ENCODE measurements at regions of chr14 and their contacts with region 1.

Region 1: GRCh38 chr14:102591889-102592763 is at the start of gene RCOR1:
- DNase-seq: peak; percentile 97
- H3K4me3 ChIP-seq: peak within 1 kb of the TSS; percentile 88 to 96 (median 95)
- H3K27ac ChIP-seq: peak within 1 kb of the TSS; percentile 98 to 100
- H3K4me1 ChIP-seq: peaks cover 3 to 9% of the 10 kb centered on the region in 2 donors
- H3K27me3 ChIP-seq: no peaks in the 10 kb centered on the region
- CTCF ChIP-seq: no peak
- POLR2A ChIP-seq: no peak
- total RNA-seq, gene RCOR1: 15.7 to 21.8 (median 20.3) TPM

Region 2: DNA sequence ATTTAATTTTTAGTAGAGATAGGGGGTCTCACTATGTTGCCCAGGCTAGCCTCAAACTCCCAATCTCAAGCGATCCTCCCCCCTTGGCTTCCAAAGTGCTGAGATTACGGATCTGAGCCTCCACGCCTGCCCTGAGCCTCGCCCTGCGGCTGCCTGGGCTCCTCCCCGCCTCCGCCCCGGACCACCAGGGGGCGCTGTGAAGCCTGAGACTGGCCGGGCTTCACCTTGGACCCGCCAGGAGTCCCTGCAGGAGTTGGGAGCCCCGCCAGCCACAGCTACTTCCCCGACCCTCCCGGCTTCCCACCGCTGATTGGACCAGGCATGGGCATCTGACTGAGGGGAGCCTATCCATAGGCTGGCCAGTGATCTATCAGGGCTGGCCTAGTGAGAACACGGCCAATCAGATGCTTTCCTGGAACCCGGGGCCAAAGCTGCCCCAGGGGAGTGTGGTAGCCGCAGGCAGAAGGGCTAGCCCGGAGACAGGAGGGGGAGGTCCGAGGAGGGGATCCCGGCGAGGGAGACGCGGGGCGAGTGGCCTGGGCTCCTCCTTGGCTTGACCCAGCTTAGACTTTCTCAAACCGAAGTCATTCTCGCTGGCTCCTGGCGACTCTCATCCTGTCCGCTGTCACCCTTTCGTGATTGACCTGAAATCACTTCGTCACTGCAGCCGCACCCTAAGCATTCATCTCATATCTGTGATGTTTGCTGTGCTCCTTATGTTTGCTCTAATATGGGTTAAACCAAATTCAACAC is 67.5 kb before region 1 on chr14:
- intact Hi-C with region 1: no loop called
- DNase-seq: peak; percentile 95 to 98
- H3K4me3 ChIP-seq: peak overlapping the region; percentile 61 to 82 (median 62)
- H3K27ac ChIP-seq: peak overlapping the region; percentile 82 to 84
- H3K4me1 ChIP-seq: no peaks in the 10 kb centered on the region
- H3K27me3 ChIP-seq: no peaks in the 10 kb centered on the region
- CTCF ChIP-seq: peak; percentile 97 to 98 (median 98)
- POLR2A ChIP-seq: no peak

Region 3: GRCh38 chr14:102655170-102655569 is 63.0 kb after region 1 on chr14:
- intact Hi-C with region 1: loop called (anchors 2 kb)
- DNase-seq: no peak
- H3K4me3 ChIP-seq: no peak overlapping the region
- H3K27ac ChIP-seq: no peak overlapping the region
- H3K4me1 ChIP-seq: peaks cover 0 to 3% of the 10 kb centered on the region in 2 donors
- H3K27me3 ChIP-seq: no peaks in the 10 kb centered on the region
- CTCF ChIP-seq: no peak
- POLR2A ChIP-seq: no peak

Measured in breast epithelium (tissue), 4 donors.